ENCODE measurements at regions of chr17 and their contacts with region 1.

Region 1: DNA sequence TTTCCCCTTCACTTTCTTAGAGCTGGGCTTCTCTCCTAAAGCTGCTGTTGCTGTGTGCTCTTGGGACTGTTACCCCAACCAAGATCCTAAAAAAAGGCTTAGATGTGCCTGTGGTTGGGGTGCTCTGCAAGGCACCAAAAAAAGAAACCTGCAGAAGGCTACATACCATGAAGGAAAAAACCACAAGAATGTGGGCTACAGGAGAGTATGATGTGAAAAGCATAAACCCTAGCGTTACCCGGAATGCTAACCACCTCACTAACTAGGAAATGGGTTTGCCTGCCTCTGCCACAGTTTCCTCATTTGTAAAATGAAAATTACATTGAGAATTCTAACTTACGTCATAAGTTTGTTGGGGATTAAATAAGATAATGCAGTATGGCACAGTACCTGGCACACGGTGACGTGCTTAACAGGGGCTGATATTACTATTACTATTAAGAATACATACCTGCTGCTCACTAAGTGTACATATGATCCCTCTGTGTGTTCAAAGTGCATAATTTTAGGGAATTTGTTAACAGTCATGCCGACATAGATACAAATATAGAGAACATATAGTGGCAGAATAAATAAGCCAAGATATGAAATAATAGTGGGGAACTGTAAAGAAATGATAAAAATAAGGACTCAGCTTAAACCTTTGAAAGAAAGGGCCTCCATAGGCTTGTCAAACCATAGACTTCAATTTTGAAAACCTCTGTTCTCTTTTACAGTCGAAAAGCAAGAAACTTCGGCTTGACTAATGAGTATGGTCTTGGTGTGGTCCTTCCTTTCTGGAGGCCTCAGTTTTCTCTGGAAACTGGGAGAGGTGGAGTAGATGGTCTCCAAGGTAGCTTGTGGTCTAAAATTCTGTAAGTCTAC is 177.8 kb upstream of the TBX2 start:
- DNase-seq: peak; percentile 82
- H3K4me3 Mint-ChIP-seq: peak overlapping the region; percentile 70
- H3K27ac Mint-ChIP-seq: peak overlapping the region; percentile 75
- H3K4me1 Mint-ChIP-seq: peaks cover 54% of the 10 kb centered on the region
- H3K27me3 Mint-ChIP-seq: no peaks in the 10 kb centered on the region

Region 2: DNA sequence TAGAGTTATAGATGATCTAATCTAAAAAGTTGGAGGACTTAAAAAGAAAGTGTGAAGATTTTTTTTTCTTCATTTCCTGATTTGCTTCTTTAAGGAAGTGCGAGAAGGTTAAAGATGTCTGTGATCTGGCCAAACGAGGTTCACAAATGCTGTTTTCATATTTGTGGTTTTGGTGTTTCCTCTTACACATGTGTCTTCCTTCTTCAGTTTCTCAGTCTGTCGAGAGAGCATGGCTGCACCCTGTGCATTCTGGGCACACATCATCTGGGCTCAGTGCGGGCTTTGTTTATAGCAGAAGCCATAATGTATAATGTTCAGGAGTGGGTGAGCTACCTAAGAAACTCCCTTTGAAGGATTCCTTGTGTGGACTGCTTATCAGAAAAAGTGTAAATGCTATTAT is 82.6 kb before region 1 on chr17:
- intact Hi-C with region 1: loop called (anchors 1 kb)
- DNase-seq: peak; percentile 88
- H3K4me3 Mint-ChIP-seq: peak overlapping the region; percentile 51
- H3K27ac Mint-ChIP-seq: peak overlapping the region; percentile 78
- H3K4me1 Mint-ChIP-seq: peaks cover 12% of the 10 kb centered on the region
- H3K27me3 Mint-ChIP-seq: no peaks in the 10 kb centered on the region

Region 3: GRCh38 chr17:61239261-61239660 is 17.4 kb after region 1 on chr17:
- intact Hi-C with region 1: loop called (anchors 1 kb)
- DNase-seq: no peak
- H3K4me3 Mint-ChIP-seq: peak overlapping the region; percentile 11
- H3K27ac Mint-ChIP-seq: peak overlapping the region; percentile 7
- H3K4me1 Mint-ChIP-seq: peaks cover 9% of the 10 kb centered on the region
- H3K27me3 Mint-ChIP-seq: no peaks in the 10 kb centered on the region

Region 4: GRCh38 chr17:61279476-61280143 is 57.8 kb after region 1 on chr17:
- intact Hi-C with region 1: loop called (anchors 5 kb)
- DNase-seq: no peak
- H3K4me3 Mint-ChIP-seq: no peak overlapping the region
- H3K27ac Mint-ChIP-seq: no peak overlapping the region
- H3K4me1 Mint-ChIP-seq: peaks cover 20% of the 10 kb centered on the region
- H3K27me3 Mint-ChIP-seq: no peaks in the 10 kb centered on the region

Measured in activated CD4-positive, alpha-beta T cell treated with anti-CD3 and anti-CD28 coated beads, Interleukin-2, amount 10 ng/mL, durations not matched to agents 24 days and 14 days (primary cell).